ENCODE measurements at regions of chr14 and their contacts with region 1.

Region 1: DNA sequence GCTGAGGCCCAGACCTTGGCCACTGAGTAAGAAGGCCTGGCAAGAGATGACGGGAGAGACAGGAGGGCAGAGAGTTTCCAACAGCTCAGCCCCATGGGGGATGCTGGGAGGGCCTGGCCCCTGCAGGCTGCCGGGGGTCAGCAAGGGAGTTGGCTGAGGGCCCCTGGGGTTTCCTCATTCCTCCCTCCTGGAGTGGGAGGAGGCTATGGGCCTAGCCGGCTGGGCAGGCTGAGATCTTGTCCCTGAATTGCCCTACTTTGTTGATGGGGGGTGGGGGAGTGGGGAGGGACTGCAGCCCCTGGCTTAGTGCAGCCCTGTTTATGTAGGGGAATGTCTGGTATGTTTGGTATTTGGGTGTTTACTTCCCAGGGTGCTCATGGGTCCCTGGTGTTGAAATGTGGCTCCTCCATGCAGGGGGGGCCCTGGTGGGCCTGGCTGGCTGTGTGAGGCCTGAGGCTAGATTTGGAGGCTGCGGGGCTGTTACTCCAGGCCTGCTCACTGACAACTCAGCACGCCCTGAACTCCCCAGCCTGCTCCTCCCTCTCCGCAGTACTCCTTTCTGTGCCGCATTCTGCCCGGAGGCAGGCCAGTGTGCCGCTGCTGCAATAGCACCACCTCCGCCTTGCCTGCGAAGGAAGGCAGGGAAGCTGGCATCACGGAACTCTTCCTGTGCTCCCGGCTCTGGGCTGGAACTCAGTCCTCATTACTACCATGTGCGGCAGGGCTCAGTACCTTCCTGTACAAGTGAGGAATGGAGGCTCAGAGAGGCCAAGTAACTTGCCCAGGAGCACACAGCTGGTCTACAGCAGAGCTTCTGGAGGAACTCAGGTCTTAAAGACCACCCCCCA is 25.3 kb downstream of the JDP2 start:
- DNase-seq: no peak
- ATAC-seq: no peak
- H3K4me3 ChIP-seq: no peak overlapping the region
- H3K27ac ChIP-seq: peak overlapping the region; percentile 59
- H3K4me1 ChIP-seq: peaks cover 30% of the 10 kb centered on the region
- H3K27me3 ChIP-seq: no peaks in the 10 kb centered on the region
- CTCF ChIP-seq: no peak
- EP300 ChIP-seq: no peak
- POLR2A ChIP-seq: no peak
- RAD21 ChIP-seq: no peak

Region 2: GRCh38 chr14:75301666-75302325 is 151.3 kb before region 1 on chr14:
- CTCF ChIA-PET with region 1: interaction called, 240 read pairs
- POLR2A ChIA-PET with region 1: interaction called, 4 read pairs
- RAD21 ChIA-PET with region 1: interaction called, 18 read pairs
- SMC1A ChIA-PET with region 1: interaction called, 17 read pairs
- in situ Hi-C with region 1: loop called (anchors 10 kb)
- intact Hi-C with region 1: no loop called
- DNase-seq: no peak
- ATAC-seq: peak; percentile 29; the same call in 1 of the 3 replicates
- H3K4me3 ChIP-seq: no peak overlapping the region
- H3K27ac ChIP-seq: no peak overlapping the region
- H3K4me1 ChIP-seq: no peaks in the 10 kb centered on the region
- H3K27me3 ChIP-seq: no peaks in the 10 kb centered on the region
- CTCF ChIP-seq: no peak
- EP300 ChIP-seq: no peak
- POLR2A ChIP-seq: no peak
- RAD21 ChIP-seq: no peak

Region 3: GRCh38 chr14:75328558-75329155 is 124.5 kb before region 1 on chr14:
- CTCF ChIA-PET with region 1: interaction called, 11 read pairs
- POLR2A ChIA-PET with region 1: no interaction called
- RAD21 ChIA-PET with region 1: interaction called, 9 read pairs
- SMC1A ChIA-PET with region 1: interaction called, 8 read pairs
- in situ Hi-C with region 1: no loop called
- intact Hi-C with region 1: no loop called
- DNase-seq: no peak
- ATAC-seq: no peak
- H3K4me3 ChIP-seq: no peak overlapping the region
- H3K27ac ChIP-seq: no peak overlapping the region
- H3K4me1 ChIP-seq: peaks cover 3% of the 10 kb centered on the region; the same call in 1 of the 2 replicates
- H3K27me3 ChIP-seq: no peaks in the 10 kb centered on the region; a peak in 2 of 4 replicates
- CTCF ChIP-seq: no peak
- EP300 ChIP-seq: no peak
- POLR2A ChIP-seq: no peak
- RAD21 ChIP-seq: no peak

Region 4: DNA sequence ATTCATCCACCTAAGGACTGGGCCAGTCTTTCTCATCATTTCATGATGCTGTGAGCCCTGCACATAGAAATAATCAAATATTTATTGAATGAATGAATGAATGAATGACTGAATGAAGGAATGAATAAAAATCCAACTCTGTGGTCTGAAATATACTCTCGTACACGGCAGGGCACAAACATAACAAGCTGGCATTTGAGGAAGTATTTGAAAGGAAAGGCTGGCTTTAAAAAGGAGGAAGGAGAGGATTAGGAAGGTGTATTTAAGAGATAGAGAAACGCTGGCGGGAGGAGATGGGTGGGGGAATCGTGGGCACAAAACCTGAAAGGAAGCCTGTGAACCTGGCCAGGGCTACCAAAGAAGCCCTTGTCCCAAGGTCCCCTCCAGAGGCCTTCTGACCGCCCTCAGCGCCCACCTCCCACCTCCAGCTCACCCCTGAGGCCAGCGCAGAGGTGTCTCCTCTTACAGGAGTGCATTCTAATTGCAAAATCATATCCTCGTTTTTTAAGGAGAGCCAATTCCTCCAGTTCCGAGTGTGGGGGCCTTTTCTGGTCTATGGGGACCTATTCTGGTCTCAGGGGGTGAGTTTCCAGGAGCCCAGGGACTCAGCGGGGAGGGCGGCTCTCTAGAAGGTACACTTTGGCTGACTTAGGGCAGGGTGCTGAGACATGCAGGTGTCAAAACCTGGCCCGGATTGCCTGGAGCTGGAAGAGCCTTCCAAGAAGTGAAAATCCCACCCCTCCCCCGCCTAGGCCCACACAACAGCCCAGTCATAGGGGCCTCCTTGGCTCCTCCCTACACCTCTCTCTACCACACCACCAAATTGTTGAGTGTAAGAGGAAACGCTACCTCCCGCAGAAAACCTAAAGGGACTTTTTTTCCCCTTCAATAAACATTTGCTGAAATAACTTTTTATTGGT is 34.0 kb before region 1 on chr14:
- CTCF ChIA-PET with region 1: interaction called, 11 read pairs
- POLR2A ChIA-PET with region 1: interaction called, 4 read pairs
- RAD21 ChIA-PET with region 1: interaction called, 12 read pairs
- SMC1A ChIA-PET with region 1: interaction called, 8 read pairs
- in situ Hi-C with region 1: no loop called
- intact Hi-C with region 1: no loop called
- DNase-seq: peak; percentile 57
- ATAC-seq: peak; percentile 97
- H3K4me3 ChIP-seq: peak overlapping the region; percentile 45
- H3K27ac ChIP-seq: peak overlapping the region; percentile 62
- H3K4me1 ChIP-seq: peaks cover 14% of the 10 kb centered on the region
- H3K27me3 ChIP-seq: no peaks in the 10 kb centered on the region
- CTCF ChIP-seq: no peak
- EP300 ChIP-seq: peak in 1 of 2 experiments; percentile 19; a peak in 1 of 4 replicates
- POLR2A ChIP-seq: peak; percentile 55; the same call in 1 of the 2 replicates
- RAD21 ChIP-seq: no peak

Region 5: DNA sequence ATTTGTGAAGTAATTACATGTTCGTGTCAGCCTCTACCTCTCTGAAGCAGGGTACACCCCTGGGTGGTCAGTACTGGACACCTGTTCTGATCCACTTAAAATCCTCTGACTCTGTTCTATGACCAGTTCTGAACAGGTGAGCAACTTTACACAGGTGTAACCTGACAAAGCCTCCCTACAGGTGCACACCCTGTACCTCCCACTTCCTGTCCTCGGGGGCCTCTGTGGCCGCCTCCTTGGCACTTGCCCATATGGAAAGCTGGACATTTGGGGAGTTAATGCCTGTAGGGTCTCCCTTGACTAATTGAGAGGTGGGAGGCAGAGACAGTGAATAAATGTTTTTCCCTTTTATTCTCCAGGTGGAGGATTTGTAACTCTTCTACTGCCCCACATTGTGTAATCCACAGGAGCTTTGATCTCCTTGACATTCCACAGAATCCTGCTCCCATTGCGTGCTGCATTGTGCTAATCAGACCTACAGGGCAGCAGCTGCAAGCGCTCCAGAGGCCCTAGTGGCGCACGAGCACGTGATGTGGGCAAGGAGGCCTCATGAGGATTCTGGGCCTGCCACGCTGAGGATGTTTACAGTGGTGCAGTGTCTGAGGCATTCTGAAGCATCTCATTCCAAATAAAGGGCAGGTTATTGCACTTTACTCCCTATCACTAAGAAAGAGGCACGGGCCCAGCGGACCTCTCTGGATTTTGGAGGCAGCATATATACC is 23.3 kb after region 1 on chr14:
- CTCF ChIA-PET with region 1: interaction called, 37 read pairs
- POLR2A ChIA-PET with region 1: no interaction called
- RAD21 ChIA-PET with region 1: interaction called, 13 read pairs
- SMC1A ChIA-PET with region 1: interaction called, 16 read pairs
- in situ Hi-C with region 1: no loop called
- intact Hi-C with region 1: no loop called
- DNase-seq: no peak
- ATAC-seq: no peak
- H3K4me3 ChIP-seq: no peak overlapping the region
- H3K27ac ChIP-seq: no peak overlapping the region
- H3K4me1 ChIP-seq: peaks cover 29% of the 10 kb centered on the region
- H3K27me3 ChIP-seq: no peaks in the 10 kb centered on the region
- CTCF ChIP-seq: no peak
- EP300 ChIP-seq: no peak
- POLR2A ChIP-seq: no peak
- RAD21 ChIP-seq: no peak

Region 6: GRCh38 chr14:75522224-75522982 is 69.3 kb after region 1 on chr14 and contains the start of gene BATF:
- CTCF ChIA-PET with region 1: interaction called, 10 read pairs
- POLR2A ChIA-PET with region 1: no interaction called
- RAD21 ChIA-PET with region 1: interaction called, 7 read pairs
- SMC1A ChIA-PET with region 1: interaction called, 3 read pairs
- in situ Hi-C with region 1: no loop called
- intact Hi-C with region 1: no loop called
- DNase-seq: no peak
- ATAC-seq: peak; percentile 58
- H3K4me3 ChIP-seq: peak within 1 kb of the TSS; percentile 95
- H3K27ac ChIP-seq: peak within 1 kb of the TSS; percentile 93
- H3K4me1 ChIP-seq: peaks cover 29% of the 10 kb centered on the region
- H3K27me3 ChIP-seq: no peaks in the 10 kb centered on the region
- CTCF ChIP-seq: no peak
- EP300 ChIP-seq: peak; percentile 22 to 42; a peak in 1 of 4 replicates
- POLR2A ChIP-seq: peak; percentile 98
- RAD21 ChIP-seq: peak; percentile 25; the same call in 1 of the 2 replicates
- polyA plus RNA-seq, gene BATF: 10.0 to 30.9 TPM